Naive thymus-derived CD4-positive, alpha-beta T cell (primary cell): ENCODE measurements at regions of chr1 and their contacts with region 1.

Region 1: DNA sequence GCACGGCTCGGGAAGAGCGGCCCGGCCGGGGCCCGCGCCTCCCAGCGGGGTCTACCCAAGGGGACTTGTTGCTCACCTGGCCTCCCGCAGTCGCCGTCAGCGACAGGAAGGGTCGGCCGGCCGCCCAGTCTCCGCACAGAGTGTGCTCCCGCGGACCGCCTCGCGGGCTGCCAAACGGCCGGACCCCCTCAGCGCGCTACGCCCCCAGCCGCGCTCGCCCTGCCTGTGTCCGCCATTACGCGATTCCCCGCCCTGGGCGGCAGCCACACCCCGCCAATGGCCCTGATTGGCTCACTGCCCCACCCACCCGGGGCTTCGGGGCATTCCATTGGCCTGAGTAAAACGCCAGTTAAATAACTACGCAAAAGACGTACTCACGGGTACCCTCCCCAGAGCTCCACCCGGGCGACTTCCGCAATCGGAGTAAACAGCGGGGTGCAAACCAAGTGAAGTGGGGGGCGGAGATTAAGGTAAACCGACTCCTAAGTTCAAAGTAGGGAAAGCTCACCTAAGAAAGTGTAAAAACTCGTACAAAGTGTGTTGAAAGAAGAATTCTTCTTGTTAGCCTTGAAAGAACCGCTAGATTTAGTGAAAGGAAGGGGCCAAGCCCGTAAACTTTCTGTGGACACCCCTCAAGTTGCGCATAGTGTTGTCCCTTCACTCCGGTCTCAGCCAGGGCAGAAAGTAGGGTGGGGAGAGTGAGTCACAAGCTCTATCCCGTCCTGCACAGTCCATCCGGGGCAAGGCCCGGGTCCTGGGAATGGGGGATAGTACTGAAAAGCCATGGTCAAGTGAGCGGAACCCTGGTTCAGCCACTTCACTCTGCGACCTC is at the start of gene WASF2:
- DNase-seq: peak; percentile 91 to 99 (median 97)
- ATAC-seq: peak; percentile 98
- H3K4me3 ChIP-seq: peak within 1 kb of the TSS; percentile 100
- H3K4me3 Mint-ChIP-seq: peak within 1 kb of the TSS; percentile 89 to 99 (median 96)
- H3K27ac ChIP-seq: peak within 1 kb of the TSS; percentile 88
- H3K27ac Mint-ChIP-seq: peak within 1 kb of the TSS; percentile 97 to 100 (median 99)
- H3K4me1 ChIP-seq: peaks cover 14 to 19% of the 10 kb centered on the region in 2 donors
- H3K4me1 Mint-ChIP-seq: peaks cover 21 to 46% (median 42%) of the 10 kb centered on the region in 7 donors
- H3K27me3 ChIP-seq: no peaks in the 10 kb centered on the region
- H3K27me3 Mint-ChIP-seq: no peaks in the 10 kb centered on the region
- total RNA-seq, gene WASF2: 136 to 177 (median 145) TPM

Region 2: GRCh38 chr1:27416387-27417111 is 73.6 kb before region 1 on chr1:
- CTCF ChIA-PET with region 1: interaction called, 4 read pairs
- POLR2A ChIA-PET with region 1: interaction called, 8 read pairs
- intact Hi-C with region 1: loop called (anchors 1 to 2 kb)
- DNase-seq: peak in 7 of 9 donors; percentile 44 to 67 (median 56)
- ATAC-seq: peak; percentile 87
- H3K4me3 ChIP-seq: no peak overlapping the region
- H3K4me3 Mint-ChIP-seq: no peak overlapping the region
- H3K27ac ChIP-seq: peak overlapping the region; percentile 10
- H3K27ac Mint-ChIP-seq: peak overlapping the region; percentile 3 to 85 (median 53)
- H3K4me1 ChIP-seq: peaks cover 0 to 11% of the 10 kb centered on the region in 2 donors
- H3K4me1 Mint-ChIP-seq: peaks cover 12 to 46% (median 35%) of the 10 kb centered on the region in 7 donors
- H3K27me3 ChIP-seq: no peaks in the 10 kb centered on the region
- H3K27me3 Mint-ChIP-seq: no peaks in the 10 kb centered on the region

Region 3: DNA sequence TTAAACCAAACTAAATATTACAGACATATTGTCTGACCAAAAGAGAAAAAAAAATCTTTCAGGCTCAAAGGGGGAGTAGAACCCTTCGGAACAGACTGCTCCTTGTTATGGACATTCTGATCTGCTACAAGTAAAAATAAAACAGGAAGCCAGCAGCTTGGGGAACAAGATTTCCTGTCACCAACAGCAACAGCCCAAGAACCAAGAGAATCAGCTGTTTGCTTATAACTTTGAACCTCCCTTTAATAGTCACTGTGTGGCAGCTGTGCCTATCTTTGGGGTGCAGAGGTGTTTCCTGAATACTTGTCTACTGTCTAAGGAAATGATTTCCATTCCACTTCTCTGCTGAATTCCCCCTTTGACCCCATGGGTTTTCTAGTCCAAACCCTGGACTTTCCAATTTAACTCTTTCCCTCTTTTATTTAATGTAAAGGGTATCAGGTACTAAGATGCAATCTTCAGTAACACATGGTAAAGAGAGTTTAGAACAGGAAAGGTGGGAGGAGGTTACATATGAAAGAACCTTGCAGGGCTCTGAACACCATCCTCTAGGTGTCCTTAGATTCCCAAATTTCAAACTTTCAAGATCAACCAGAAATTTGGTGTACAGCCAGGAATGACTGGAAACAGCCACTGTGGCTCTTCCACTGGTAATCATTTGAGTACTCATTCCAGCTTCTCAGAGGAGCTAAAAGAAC is 59.1 kb before region 1 on chr1:
- CTCF ChIA-PET with region 1: interaction called, 6 read pairs
- POLR2A ChIA-PET with region 1: interaction called, 29 read pairs
- intact Hi-C with region 1: loop called (anchors 1 to 2 kb)
- DNase-seq: peak in 7 of 9 donors; percentile 50 to 72 (median 69)
- ATAC-seq: peak; percentile 81
- H3K4me3 ChIP-seq: peak overlapping the region; percentile 21
- H3K4me3 Mint-ChIP-seq: peak overlapping the region; percentile 58 to 94 (median 82)
- H3K27ac ChIP-seq: peak overlapping the region; percentile 74
- H3K27ac Mint-ChIP-seq: peak overlapping the region; percentile 71 to 96 (median 89)
- H3K4me1 ChIP-seq: peaks cover 33 to 86% of the 10 kb centered on the region in 2 donors
- H3K4me1 Mint-ChIP-seq: peaks cover 54 to 91% (median 77%) of the 10 kb centered on the region in 7 donors
- H3K27me3 ChIP-seq: no peaks in the 10 kb centered on the region
- H3K27me3 Mint-ChIP-seq: no peaks in the 10 kb centered on the region

Region 4: GRCh38 chr1:27436204-27437159 is 53.6 kb before region 1 on chr1:
- CTCF ChIA-PET with region 1: interaction called, 3 read pairs
- POLR2A ChIA-PET with region 1: interaction called, 29 read pairs
- intact Hi-C with region 1: loop called in 1 of 2 experiments (anchors 1 kb)
- DNase-seq: peak in 7 of 9 donors; percentile 37 to 55 (median 48)
- ATAC-seq: peak; percentile 88
- H3K4me3 ChIP-seq: peak overlapping the region; percentile 5
- H3K4me3 Mint-ChIP-seq: peak overlapping the region; percentile 70 to 89 (median 79)
- H3K27ac ChIP-seq: peak overlapping the region; percentile 68
- H3K27ac Mint-ChIP-seq: peak overlapping the region; percentile 77 to 96 (median 91)
- H3K4me1 ChIP-seq: peaks cover 53 to 75% of the 10 kb centered on the region in 2 donors
- H3K4me1 Mint-ChIP-seq: peaks cover 53 to 87% (median 73%) of the 10 kb centered on the region in 7 donors
- H3K27me3 ChIP-seq: no peaks in the 10 kb centered on the region
- H3K27me3 Mint-ChIP-seq: no peaks in the 10 kb centered on the region

Region 5: GRCh38 chr1:27473755-27474154 is 16.4 kb before region 1 on chr1:
- CTCF ChIA-PET with region 1: interaction called, 3 read pairs
- POLR2A ChIA-PET with region 1: no interaction called
- intact Hi-C with region 1: loop called in 1 of 2 experiments (anchors 2 kb)
- DNase-seq: peak in 4 of 9 donors; percentile 16 to 31 (median 24)
- ATAC-seq: peak; percentile 40
- H3K4me3 ChIP-seq: no peak overlapping the region
- H3K4me3 Mint-ChIP-seq: peak overlapping the region; percentile 5 to 77 (median 58)
- H3K27ac ChIP-seq: no peak overlapping the region
- H3K27ac Mint-ChIP-seq: peak overlapping the region; percentile 10 to 82 (median 66)
- H3K4me1 ChIP-seq: peaks cover 17 to 45% of the 10 kb centered on the region in 2 donors
- H3K4me1 Mint-ChIP-seq: peaks cover 64 to 93% (median 83%) of the 10 kb centered on the region in 7 donors
- H3K27me3 ChIP-seq: no peaks in the 10 kb centered on the region
- H3K27me3 Mint-ChIP-seq: no peaks in the 10 kb centered on the region

Region 6: DNA sequence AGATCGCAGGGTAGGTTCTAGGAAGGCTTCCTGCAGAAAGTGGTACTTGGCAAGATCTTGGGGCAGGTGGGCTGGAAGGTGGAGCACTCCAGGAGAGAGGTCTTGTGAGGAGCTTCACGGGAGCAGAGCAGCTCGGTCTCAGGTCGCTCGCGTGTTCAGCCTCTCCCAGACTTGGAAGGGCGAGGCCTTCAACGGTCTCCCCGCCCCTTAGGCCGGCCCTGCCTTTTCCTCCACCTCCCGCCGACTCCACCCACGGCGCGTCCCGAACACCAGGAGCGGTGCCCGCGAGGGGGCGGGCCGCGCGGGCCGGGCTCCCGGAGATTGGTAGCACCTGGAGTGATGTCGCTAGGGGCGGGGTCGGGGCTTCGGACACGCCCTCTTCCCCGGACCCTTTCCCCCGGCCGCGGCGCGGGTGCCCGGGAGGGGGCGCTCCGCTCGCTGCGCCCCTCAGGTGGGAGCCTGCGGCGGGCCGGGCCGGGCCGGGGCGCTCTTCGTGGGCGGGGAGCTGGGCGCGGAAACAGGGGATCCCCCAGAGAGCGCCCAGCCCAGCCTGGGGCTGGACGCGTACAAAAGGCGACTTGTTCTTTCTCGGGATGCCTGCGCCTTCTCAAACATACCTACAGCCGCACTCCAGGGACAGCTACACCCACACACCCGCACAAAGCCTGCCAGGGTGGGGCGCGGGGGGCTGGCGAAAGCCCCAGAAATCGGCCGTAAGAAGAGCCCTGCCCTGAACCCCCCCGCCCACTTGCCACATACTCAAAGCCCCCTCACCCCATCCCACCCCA is 78.4 kb after region 1 on chr1:
- CTCF ChIA-PET with region 1: no interaction called
- POLR2A ChIA-PET with region 1: no interaction called
- intact Hi-C with region 1: loop called (anchors 1 kb)
- DNase-seq: peak; percentile 87 to 96 (median 91)
- ATAC-seq: peak; percentile 96
- H3K4me3 ChIP-seq: peak overlapping the region; percentile 51
- H3K4me3 Mint-ChIP-seq: peak overlapping the region; percentile 55 to 88 (median 78)
- H3K27ac ChIP-seq: peak overlapping the region; percentile 68
- H3K27ac Mint-ChIP-seq: peak overlapping the region; percentile 64 to 93 (median 83)
- H3K4me1 ChIP-seq: peaks cover 7 to 19% of the 10 kb centered on the region in 2 donors
- H3K4me1 Mint-ChIP-seq: peaks cover 15 to 57% (median 51%) of the 10 kb centered on the region in 7 donors
- H3K27me3 ChIP-seq: no peaks in the 10 kb centered on the region
- H3K27me3 Mint-ChIP-seq: no peaks in the 10 kb centered on the region

Region 7: GRCh38 chr1:27725374-27726173 is 235.4 kb after region 1 on chr1 and contains the start of gene FAM76A:
- CTCF ChIA-PET with region 1: no interaction called
- POLR2A ChIA-PET with region 1: no interaction called
- intact Hi-C with region 1: loop called in 1 of 2 experiments (anchors 1 kb)
- DNase-seq: peak; percentile 97 to 100 (median 99)
- ATAC-seq: peak; percentile 97
- H3K4me3 ChIP-seq: peak within 1 kb of the TSS; percentile 77
- H3K4me3 Mint-ChIP-seq: peak within 1 kb of the TSS; percentile 86 to 93 (median 90)
- H3K27ac ChIP-seq: peak within 1 kb of the TSS; percentile 91
- H3K27ac Mint-ChIP-seq: peak within 1 kb of the TSS; percentile 93 to 100 (median 98)
- H3K4me1 ChIP-seq: peaks cover 7 to 17% of the 10 kb centered on the region in 2 donors
- H3K4me1 Mint-ChIP-seq: peaks cover 9 to 35% (median 28%) of the 10 kb centered on the region in 7 donors
- H3K27me3 ChIP-seq: no peaks in the 10 kb centered on the region
- H3K27me3 Mint-ChIP-seq: no peaks in the 10 kb centered on the region
- total RNA-seq, gene FAM76A: 15.2 to 25.2 (median 22.2) TPM

Region 8: GRCh38 chr1:29282924-29283811 is 1793.0 kb after region 1 on chr1:
- CTCF ChIA-PET with region 1: no interaction called
- POLR2A ChIA-PET with region 1: no interaction called
- intact Hi-C with region 1: no loop called
- DNase-seq: no peak
- ATAC-seq: peak; percentile 45
- H3K4me3 ChIP-seq: no peak overlapping the region
- H3K4me3 Mint-ChIP-seq: peak overlapping the region in 8 of 10 donors; percentile 8 to 70 (median 30)
- H3K27ac ChIP-seq: no peak overlapping the region
- H3K27ac Mint-ChIP-seq: no peak overlapping the region
- H3K4me1 ChIP-seq: no peaks in the 10 kb centered on the region
- H3K4me1 Mint-ChIP-seq: peaks cover 0 to 11% (median 4%) of the 10 kb centered on the region in 7 donors
- H3K27me3 ChIP-seq: no peaks in the 10 kb centered on the region
- H3K27me3 Mint-ChIP-seq: peaks cover 0 to 9% (median 3%) of the 10 kb centered on the region in 5 donors